ENCODE measurements at regions of chr3 and their contacts with region 1.

Region 1: GRCh38 chr3:114152519-114153151 is 26.2 kb downstream of the DRD3 start:
- DNase-seq: peak; percentile 86
- H3K4me3 Mint-ChIP-seq: peak overlapping the region; percentile 67
- H3K27ac Mint-ChIP-seq: no peak overlapping the region
- H3K4me1 Mint-ChIP-seq: no peaks in the 10 kb centered on the region
- H3K27me3 Mint-ChIP-seq: peaks cover 28% of the 10 kb centered on the region
- CTCF ChIP-seq: peak; percentile 73

Region 2: GRCh38 chr3:113873814-113874526 is 278.7 kb before region 1 on chr3:
- CTCF ChIA-PET with region 1: no interaction called
- intact Hi-C with region 1: no loop called
- DNase-seq: no peak
- H3K4me3 Mint-ChIP-seq: no peak overlapping the region
- H3K27ac Mint-ChIP-seq: no peak overlapping the region
- H3K4me1 Mint-ChIP-seq: peaks cover 9% of the 10 kb centered on the region
- H3K27me3 Mint-ChIP-seq: no peaks in the 10 kb centered on the region
- CTCF ChIP-seq: no peak

Region 3: DNA sequence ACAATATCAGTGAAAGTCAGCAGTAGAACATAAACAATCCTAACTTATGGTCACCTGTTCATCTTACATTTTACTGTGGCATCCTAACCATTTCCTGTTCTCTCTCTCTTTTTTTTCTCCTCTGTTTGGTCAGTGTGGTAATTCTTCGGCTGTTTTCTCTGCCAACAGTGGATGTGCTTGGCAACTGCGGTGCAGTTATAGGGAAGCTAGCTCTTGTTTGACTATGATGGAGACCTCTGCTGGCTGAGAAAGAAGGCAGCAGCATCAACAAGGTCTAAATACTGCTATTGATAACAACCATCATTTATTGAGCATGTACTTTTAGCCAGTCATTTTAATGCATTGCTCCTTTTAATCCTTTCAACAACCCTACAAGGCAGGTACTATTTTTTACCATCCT is 26.9 kb after region 1 on chr3:
- CTCF ChIA-PET with region 1: interaction called, 9 read pairs
- intact Hi-C with region 1: loop called (anchors 1 kb)
- DNase-seq: peak; percentile 28
- H3K4me3 Mint-ChIP-seq: no peak overlapping the region
- H3K27ac Mint-ChIP-seq: no peak overlapping the region
- H3K4me1 Mint-ChIP-seq: no peaks in the 10 kb centered on the region
- H3K27me3 Mint-ChIP-seq: peaks cover 86% of the 10 kb centered on the region
- CTCF ChIP-seq: no peak

Region 4: DNA sequence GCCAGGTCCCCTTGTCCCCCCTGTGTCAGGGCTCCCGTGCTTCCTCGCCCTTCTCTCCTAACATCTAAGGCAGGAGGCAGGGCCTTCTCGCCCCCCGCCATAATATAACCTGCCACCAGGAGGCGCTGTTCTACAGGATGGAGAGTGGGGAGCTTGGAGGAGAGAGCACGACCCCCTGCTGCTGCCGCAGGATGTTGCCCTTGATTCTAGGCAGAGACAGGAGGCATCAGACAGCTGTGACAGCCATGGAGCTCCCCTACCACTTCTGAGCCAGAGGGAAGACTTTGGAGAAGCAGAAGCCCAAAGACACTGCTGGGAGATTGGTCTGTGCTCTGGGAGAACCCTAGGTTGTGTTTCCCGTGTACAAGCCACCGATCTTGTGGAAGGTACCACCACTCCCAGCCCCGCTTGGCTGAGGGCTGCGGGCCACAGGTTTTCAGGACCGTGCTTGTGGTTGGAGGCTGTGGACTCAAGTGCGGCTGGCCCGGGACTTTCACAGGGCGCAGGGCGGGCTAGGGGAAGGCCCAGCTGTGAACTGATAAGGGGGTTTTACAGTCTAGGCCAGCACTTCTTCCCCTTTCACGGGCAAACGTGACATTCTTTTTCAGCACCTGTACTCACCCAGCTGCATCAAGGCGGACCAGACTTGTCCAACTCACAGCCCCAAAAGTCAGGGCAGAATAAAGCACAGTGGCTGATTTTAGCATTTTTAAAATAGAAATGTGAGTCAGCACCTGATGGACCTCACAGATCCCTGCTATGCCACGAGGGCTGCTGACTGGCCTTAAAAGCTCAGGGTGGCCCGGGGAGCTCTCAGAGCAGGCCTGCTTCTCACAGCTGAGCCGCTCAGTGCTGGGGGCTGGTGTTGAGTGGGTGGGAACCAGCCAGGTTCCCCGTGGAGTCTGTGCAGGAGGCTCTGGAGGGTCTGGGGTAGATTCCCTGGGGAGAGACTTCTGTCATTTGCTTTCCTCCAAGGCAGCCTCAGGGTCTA is 138.6 kb after region 1 on chr3:
- CTCF ChIA-PET with region 1: no interaction called
- intact Hi-C with region 1: loop called (anchors 5 kb)
- DNase-seq: peak; percentile 81
- H3K4me3 Mint-ChIP-seq: no peak overlapping the region
- H3K27ac Mint-ChIP-seq: no peak overlapping the region
- H3K4me1 Mint-ChIP-seq: no peaks in the 10 kb centered on the region
- H3K27me3 Mint-ChIP-seq: no peaks in the 10 kb centered on the region
- CTCF ChIP-seq: peak; percentile 86

Region 5: GRCh38 chr3:114336122-114336697 is 183.6 kb after region 1 on chr3:
- CTCF ChIA-PET with region 1: no interaction called
- intact Hi-C with region 1: loop called (anchors 10 kb)
- DNase-seq: no peak
- H3K4me3 Mint-ChIP-seq: no peak overlapping the region
- H3K27ac Mint-ChIP-seq: no peak overlapping the region
- H3K4me1 Mint-ChIP-seq: no peaks in the 10 kb centered on the region
- H3K27me3 Mint-ChIP-seq: no peaks in the 10 kb centered on the region
- CTCF ChIP-seq: peak; percentile 39

Measured in Calu3 (cell line).